GM18951 (cell line): ENCODE measurements at regions of chr4 and their contacts with region 1.

Region 1: DNA sequence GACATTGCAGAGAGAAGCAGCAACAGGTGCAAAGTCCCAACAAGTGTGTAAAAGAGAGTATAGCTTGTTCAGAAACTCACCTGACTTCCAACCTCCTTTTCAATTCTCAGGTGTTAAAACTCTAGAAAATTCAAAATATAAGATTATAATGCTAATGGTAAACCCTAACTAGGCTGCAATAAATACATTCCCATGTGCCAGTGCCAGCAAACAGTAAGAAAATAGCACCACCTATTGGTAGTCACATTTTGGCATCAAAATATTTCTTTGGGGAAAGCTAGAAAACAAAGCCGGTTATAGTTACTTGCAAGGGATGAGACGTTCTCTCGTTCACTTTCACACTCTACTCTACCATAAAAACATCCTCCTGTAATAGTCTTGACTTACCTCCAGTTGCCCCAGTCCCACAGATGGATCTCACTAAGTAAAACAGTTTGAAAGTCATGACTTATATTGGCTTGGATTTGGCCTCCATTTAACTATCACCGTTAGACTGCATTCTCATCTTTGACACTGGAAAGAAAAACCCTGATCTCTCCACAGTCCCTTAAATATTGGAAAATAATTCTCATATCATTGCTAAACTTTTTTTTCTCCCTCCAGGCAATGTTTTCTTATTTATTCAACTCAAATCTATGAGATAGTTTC is 9.6 kb downstream of the BMP3 start:
- POLR2A ChIP-seq: no peak

Region 2: GRCh38 chr4:80365928-80366327 is 674.2 kb before region 1 on chr4:
- in situ Hi-C with region 1: loop called (anchors 10 kb)
- POLR2A ChIP-seq: no peak